MCF 10A (cell line): ENCODE measurements at regions of chr11 and their contacts with region 1.

Region 1: GRCh38 chr11:62841361-62842184 is 2.2 kb upstream of the WDR74 start:
- DNase-seq: peak; percentile 99
- H3K4me3 Mint-ChIP-seq: no peak overlapping the region
- H3K27ac Mint-ChIP-seq: no peak overlapping the region
- H3K4me1 Mint-ChIP-seq: peaks cover 12% of the 10 kb centered on the region
- H3K27me3 Mint-ChIP-seq: no peaks in the 10 kb centered on the region
- CTCF ChIP-seq: no peak

Region 2: GRCh38 chr11:61384271-61385242 is 1457.0 kb before region 1 on chr11:
- CTCF ChIA-PET with region 1: no interaction called
- POLR2A ChIA-PET with region 1: no interaction called
- intact Hi-C with region 1: no loop called
- DNase-seq: peak; percentile 61
- H3K4me3 Mint-ChIP-seq: no peak overlapping the region
- H3K27ac Mint-ChIP-seq: no peak overlapping the region
- H3K4me1 Mint-ChIP-seq: peaks cover 11% of the 10 kb centered on the region
- H3K27me3 Mint-ChIP-seq: no peaks in the 10 kb centered on the region
- CTCF ChIP-seq: peak; percentile 25

Region 3: DNA sequence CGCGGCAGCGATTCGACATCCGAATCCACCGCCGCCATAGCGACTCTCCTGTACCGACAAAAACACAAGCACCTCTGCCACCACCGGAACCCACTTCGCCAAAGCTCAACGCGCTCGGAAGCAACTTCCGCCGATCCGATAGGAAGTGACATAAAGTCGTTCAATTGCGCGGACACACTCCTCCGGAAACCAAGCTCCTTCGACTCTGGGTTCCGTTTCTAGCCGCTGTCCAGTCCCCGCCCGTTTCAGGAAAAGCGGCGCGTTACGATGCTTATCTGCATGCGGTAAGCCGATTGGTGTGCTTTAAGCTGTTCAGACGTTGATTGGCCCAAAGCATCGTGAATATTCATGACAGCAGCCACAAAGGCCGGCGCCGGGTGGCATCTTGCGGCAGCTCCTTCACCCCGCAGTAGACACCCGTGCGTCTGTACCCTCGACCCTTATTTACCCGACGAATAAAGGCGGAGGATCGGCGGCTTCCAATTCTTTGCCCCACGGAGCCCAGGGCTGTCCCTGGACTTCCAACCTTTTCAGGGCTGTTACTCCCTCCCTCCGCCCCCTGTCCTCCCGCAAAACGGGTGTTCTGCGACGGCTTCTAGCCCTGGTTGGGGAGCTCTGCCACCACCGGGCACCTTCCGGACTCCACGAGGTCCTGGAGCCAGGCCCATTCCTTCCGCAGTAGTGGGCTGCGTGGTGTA is 250.0 kb before region 1 on chr11 and contains the start of gene TUT1:
- CTCF ChIA-PET with region 1: no interaction called
- POLR2A ChIA-PET with region 1: interaction called, 30 read pairs
- intact Hi-C with region 1: no loop called
- DNase-seq: peak; percentile 99
- H3K4me3 Mint-ChIP-seq: peak within 1 kb of the TSS; percentile 96
- H3K27ac Mint-ChIP-seq: peak within 1 kb of the TSS; percentile 95
- H3K4me1 Mint-ChIP-seq: peaks cover 12% of the 10 kb centered on the region
- H3K27me3 Mint-ChIP-seq: no peaks in the 10 kb centered on the region
- CTCF ChIP-seq: no peak
- total RNA-seq, gene TUT1: 26.0 and 28.3 TPM in 2 replicates

Region 4: GRCh38 chr11:62732801-62733200 is 108.8 kb before region 1 on chr11:
- CTCF ChIA-PET with region 1: interaction called, 3 read pairs
- POLR2A ChIA-PET with region 1: interaction called, 95 read pairs
- intact Hi-C with region 1: loop called (anchors 2 kb)
- DNase-seq: peak; percentile 57
- H3K4me3 Mint-ChIP-seq: no peak overlapping the region
- H3K27ac Mint-ChIP-seq: no peak overlapping the region
- H3K4me1 Mint-ChIP-seq: no peaks in the 10 kb centered on the region
- H3K27me3 Mint-ChIP-seq: no peaks in the 10 kb centered on the region
- CTCF ChIP-seq: peak; percentile 42

Region 5: DNA sequence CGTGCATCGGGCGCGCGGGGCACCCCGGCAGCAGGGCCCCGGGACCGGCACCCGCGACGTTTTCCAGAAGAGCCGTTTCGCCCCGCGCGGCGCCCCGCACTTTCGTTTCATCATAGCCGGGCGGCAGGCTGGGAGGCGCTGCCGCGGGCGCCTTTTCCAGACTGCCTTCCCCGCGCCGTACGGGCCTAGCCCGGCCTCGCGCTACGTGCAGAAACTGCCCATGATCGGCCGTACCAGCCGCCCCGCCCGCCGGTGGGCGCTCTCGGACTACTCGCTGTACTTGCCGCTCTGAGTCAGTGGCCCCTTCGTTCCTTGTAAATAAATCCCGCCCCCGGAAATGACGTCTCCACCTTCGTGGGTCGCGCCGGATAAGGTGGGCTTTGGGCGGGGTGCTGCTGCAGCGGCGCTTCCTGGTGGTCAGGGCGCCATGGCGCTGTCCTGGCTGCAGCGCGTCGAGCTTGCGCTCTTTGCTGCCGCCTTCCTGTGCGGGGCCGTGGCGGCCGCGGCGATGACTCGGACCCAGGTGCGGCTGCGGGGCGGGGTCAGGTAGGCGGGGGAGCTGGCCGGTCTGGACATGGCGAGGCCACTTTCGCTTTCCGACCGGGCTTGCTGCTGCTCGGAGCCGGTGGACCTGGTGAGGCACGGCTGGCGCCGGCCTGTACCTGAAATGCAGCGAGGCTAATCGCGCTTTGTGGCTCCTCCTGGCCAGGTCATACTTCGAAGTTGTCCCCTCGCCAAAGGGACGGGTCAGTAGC is 54.4 kb before region 1 on chr11 and contains the start of gene TMEM179B:
- CTCF ChIA-PET with region 1: interaction called, 7 read pairs
- POLR2A ChIA-PET with region 1: interaction called, 147 read pairs
- intact Hi-C with region 1: loop called (anchors 2 kb)
- DNase-seq: peak; percentile 98
- H3K4me3 Mint-ChIP-seq: peak within 1 kb of the TSS; percentile 90
- H3K27ac Mint-ChIP-seq: peak within 1 kb of the TSS; percentile 93
- H3K4me1 Mint-ChIP-seq: peaks cover 15% of the 10 kb centered on the region
- H3K27me3 Mint-ChIP-seq: no peaks in the 10 kb centered on the region
- CTCF ChIP-seq: peak; percentile 40
- total RNA-seq, gene TMEM179B: 45.1 and 47.8 TPM in 2 replicates

Region 6: GRCh38 chr11:62805076-62805892 is 36.3 kb before region 1 on chr11 and contains the start of gene NXF1:
- CTCF ChIA-PET with region 1: no interaction called
- POLR2A ChIA-PET with region 1: interaction called, 106 read pairs
- intact Hi-C with region 1: loop called (anchors 2 kb)
- DNase-seq: peak; percentile 93
- H3K4me3 Mint-ChIP-seq: peak within 1 kb of the TSS; percentile 95
- H3K27ac Mint-ChIP-seq: peak within 1 kb of the TSS; percentile 99
- H3K4me1 Mint-ChIP-seq: peaks cover 20% of the 10 kb centered on the region
- H3K27me3 Mint-ChIP-seq: no peaks in the 10 kb centered on the region
- CTCF ChIP-seq: no peak
- total RNA-seq, gene NXF1: 47.6 and 53.3 TPM in 2 replicates

Region 7: GRCh38 chr11:62860835-62861563 is 19.4 kb after region 1 on chr11:
- CTCF ChIA-PET with region 1: interaction called, 7 read pairs
- POLR2A ChIA-PET with region 1: interaction called, 344 read pairs
- intact Hi-C with region 1: loop called (anchors 1 kb)
- DNase-seq: no peak
- H3K4me3 Mint-ChIP-seq: no peak overlapping the region
- H3K27ac Mint-ChIP-seq: no peak overlapping the region
- H3K4me1 Mint-ChIP-seq: peaks cover 23% of the 10 kb centered on the region
- H3K27me3 Mint-ChIP-seq: no peaks in the 10 kb centered on the region
- CTCF ChIP-seq: no peak

Region 8: GRCh38 chr11:62905927-62906531 is 64.5 kb after region 1 on chr11:
- CTCF ChIA-PET with region 1: no interaction called
- POLR2A ChIA-PET with region 1: no interaction called
- intact Hi-C with region 1: no loop called
- DNase-seq: peak; percentile 81
- H3K4me3 Mint-ChIP-seq: no peak overlapping the region
- H3K27ac Mint-ChIP-seq: no peak overlapping the region
- H3K4me1 Mint-ChIP-seq: peaks cover 6% of the 10 kb centered on the region
- H3K27me3 Mint-ChIP-seq: peaks cover 14% of the 10 kb centered on the region
- CTCF ChIP-seq: peak; percentile 95